ENCODE measurements at regions of chr14 and their contacts with region 1.

Region 1: DNA sequence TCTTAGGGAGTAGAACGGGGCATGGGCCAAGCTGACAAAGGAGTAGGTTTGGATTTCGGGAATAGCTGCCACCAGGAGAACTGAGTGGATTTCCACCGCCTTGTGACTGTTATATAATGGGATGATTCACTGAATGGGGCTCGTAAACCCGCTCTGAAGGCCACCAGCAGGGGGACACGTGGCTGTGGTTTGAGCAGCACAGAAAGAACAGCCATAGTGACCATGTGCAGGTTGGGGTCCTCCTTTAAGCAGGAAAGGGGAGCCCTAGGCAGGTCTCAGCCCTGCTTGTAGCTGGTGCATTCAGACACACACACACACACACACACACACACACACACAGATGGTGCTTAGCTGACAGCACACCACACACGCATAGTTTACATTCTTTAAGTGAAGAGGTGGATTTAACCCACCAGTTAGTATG is 8.6 kb upstream of the ASB2 start:
- DNase-seq: peak; percentile 62
- H3K4me3 ChIP-seq: no peak overlapping the region
- H3K27me3 ChIP-seq: no peaks in the 10 kb centered on the region
- CTCF ChIP-seq: peak; percentile 61

Region 2: GRCh38 chr14:93994919-93995682 is 10.1 kb after region 1 on chr14:
- CTCF ChIA-PET with region 1: interaction called, 25 read pairs
- POLR2A ChIA-PET with region 1: no interaction called
- DNase-seq: no peak
- H3K4me3 ChIP-seq: no peak overlapping the region
- H3K27me3 ChIP-seq: peaks cover 4% of the 10 kb centered on the region; the same call in 1 of the 2 replicates
- CTCF ChIP-seq: no peak

Region 3: DNA sequence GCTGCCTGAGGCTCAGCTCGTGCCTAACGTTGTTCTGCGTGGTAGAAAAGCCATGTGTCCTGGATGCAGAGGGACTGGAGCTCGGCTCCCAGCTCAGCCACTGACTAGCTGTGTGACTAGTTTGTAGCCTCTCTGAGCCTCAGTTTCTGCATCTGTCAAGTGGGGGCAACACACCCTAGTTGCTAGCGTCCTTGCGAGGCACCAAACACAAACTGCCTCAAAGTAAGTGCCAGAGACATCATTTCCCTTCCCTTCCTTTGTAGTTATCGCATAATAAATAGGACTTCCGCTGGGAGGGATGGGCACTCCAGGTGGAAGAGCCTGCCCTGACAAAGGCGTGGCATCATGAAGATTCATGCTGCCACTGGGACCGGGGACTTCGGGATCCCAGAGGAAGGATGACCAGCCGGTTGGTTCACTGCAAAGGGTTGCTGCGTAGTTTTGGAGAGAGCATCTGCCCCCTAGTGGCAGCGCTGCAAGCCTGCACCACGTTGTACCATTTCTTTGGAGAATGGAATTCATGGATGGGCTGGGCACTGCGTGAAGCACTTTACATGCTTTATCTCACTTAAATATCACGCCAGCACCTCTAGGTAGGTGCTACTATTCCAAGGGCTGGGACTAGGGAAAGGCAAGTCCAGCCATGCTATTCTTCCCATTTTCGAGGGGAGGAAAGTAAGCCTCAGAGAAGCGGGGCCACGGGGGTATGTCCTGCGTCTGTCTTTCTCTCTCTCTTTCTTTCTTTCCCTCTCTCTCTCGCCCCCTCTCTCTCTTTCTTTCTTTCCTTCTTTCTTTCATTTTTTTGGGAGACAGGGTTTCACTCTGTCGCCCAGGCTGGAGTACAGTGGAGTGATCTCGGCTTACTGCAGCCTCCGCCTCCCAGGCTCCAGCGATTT is 16.8 kb after region 1 on chr14:
- CTCF ChIA-PET with region 1: interaction called, 25 read pairs
- POLR2A ChIA-PET with region 1: no interaction called
- DNase-seq: no peak
- H3K4me3 ChIP-seq: no peak overlapping the region
- H3K27me3 ChIP-seq: peaks cover 5% of the 10 kb centered on the region
- CTCF ChIP-seq: peak; percentile 98